ENCODE measurements at regions of chr17 and their contacts with region 1.

Region 1: GRCh38 chr17:13594762-13595598 is 6.7 kb downstream of the HS3ST3A1 start:
- DNase-seq: peak; percentile 77
- H3K4me3 Mint-ChIP-seq: no peak overlapping the region
- H3K27ac Mint-ChIP-seq: no peak overlapping the region
- H3K4me1 Mint-ChIP-seq: no peaks in the 10 kb centered on the region
- H3K27me3 Mint-ChIP-seq: no peaks in the 10 kb centered on the region
- CTCF ChIP-seq: peak; percentile 45

Region 2: GRCh38 chr17:14784997-14785696 is 1190.2 kb after region 1 on chr17:
- CTCF ChIA-PET with region 1: no interaction called
- intact Hi-C with region 1: loop called (anchors 10 kb)
- DNase-seq: peak; percentile 16
- H3K4me3 Mint-ChIP-seq: no peak overlapping the region
- H3K27ac Mint-ChIP-seq: no peak overlapping the region
- H3K4me1 Mint-ChIP-seq: no peaks in the 10 kb centered on the region
- H3K27me3 Mint-ChIP-seq: no peaks in the 10 kb centered on the region
- CTCF ChIP-seq: no peak

Region 3: DNA sequence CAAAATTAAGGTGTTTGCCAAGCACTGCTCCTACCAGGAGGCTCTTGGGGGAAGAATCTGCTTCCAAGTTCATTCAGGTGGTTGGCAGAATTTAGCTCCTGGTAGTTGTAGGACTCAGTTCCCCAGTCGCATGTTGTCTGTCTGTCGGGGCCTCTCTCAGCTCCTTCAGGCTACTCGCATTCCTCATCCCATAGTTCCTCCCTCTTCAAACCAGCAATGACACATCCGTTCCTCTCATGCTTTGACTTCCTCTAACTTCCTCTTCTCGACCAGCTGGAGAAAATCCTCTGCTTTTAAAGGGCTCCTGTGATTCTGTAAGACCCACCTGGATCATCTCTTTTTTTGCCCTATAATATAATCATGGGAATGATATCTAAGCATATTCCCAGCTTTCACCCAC is 1562.1 kb after region 1 on chr17:
- CTCF ChIA-PET with region 1: no interaction called
- intact Hi-C with region 1: loop called (anchors 5 kb)
- DNase-seq: no peak
- H3K4me3 Mint-ChIP-seq: no peak overlapping the region
- H3K27ac Mint-ChIP-seq: no peak overlapping the region
- H3K4me1 Mint-ChIP-seq: no peaks in the 10 kb centered on the region
- H3K27me3 Mint-ChIP-seq: peaks cover 18% of the 10 kb centered on the region
- CTCF ChIP-seq: no peak